Breast epithelium (tissue), 4 donors: ENCODE measurements at regions of chr21 and their contacts with region 1.

Region 1: DNA sequence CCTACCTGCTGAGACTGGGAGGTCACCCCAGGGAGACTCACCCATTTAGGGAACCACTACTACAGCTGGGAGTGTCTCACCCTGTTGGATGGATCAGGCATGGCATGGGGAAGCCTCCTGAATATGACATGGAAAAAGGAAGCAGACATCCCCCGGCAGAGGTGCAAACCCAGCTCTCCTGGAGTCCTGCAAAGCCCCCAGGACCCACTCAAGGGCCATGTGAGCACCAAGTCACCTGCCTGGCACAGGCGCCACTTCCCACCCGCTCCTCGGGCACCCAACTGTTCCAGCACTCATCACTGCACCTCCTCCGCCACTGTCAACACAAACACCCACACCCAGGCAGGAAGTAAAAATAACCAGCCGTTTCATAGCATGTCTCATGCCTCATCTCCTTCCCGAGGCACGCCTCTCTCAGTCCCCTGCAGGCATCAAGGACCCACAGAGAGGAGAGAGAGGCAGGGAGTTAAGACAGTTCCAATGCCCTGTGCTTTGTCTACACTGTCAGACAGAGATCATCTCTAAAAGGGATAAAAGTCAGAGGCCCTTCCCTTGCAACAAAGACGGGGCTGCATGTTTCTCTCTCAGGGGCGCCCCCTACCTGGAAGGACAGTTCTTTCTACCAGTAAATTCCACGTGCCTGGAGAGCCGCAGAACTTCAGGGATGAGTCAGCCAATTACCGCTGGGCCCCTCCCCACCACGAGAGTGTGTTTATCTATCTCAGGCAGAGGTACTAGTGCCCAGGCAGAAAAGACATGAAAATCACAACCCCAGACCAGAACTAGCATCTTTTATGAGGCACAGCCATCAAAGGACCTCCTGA is 150.1 kb upstream of the SOD1 start:
- DNase-seq: peak in 1 of 2 donors; percentile 54
- H3K4me3 ChIP-seq: no peak overlapping the region
- H3K27ac ChIP-seq: no peak overlapping the region
- H3K4me1 ChIP-seq: no peaks in the 10 kb centered on the region
- H3K27me3 ChIP-seq: no peaks in the 10 kb centered on the region
- CTCF ChIP-seq: peak in 1 of 3 donors; percentile 8
- POLR2A ChIP-seq: no peak

Region 2: GRCh38 chr21:30541764-30542163 is 967.6 kb before region 1 on chr21 and contains the start of gene KRTAP19-6:
- intact Hi-C with region 1: loop called (anchors 10 kb)
- DNase-seq: no peak
- H3K4me3 ChIP-seq: no peak within 1 kb of the TSS
- H3K27ac ChIP-seq: no peak within 1 kb of the TSS
- H3K4me1 ChIP-seq: no peaks in the 10 kb centered on the region
- H3K27me3 ChIP-seq: no peaks in the 10 kb centered on the region
- CTCF ChIP-seq: no peak
- POLR2A ChIP-seq: no peak
- total RNA-seq, gene KRTAP19-6: not detected

Region 3: GRCh38 chr21:31530897-31531705 is 21.7 kb after region 1 on chr21:
- intact Hi-C with region 1: no loop called
- DNase-seq: peak in 1 of 2 donors; percentile 75
- H3K4me3 ChIP-seq: no peak overlapping the region
- H3K27ac ChIP-seq: peak overlapping the region in 1 of 2 donors; percentile 72
- H3K4me1 ChIP-seq: peaks cover 0 to 5% of the 10 kb centered on the region in 2 donors
- H3K27me3 ChIP-seq: no peaks in the 10 kb centered on the region
- CTCF ChIP-seq: no peak
- POLR2A ChIP-seq: no peak